Aorta (tissue), 5 donors: ENCODE measurements at regions of chr17 and their contacts with region 1.

Region 1: GRCh38 chr17:30093463-30094147 is 23.0 kb upstream of the NSRP1 start:
- DNase-seq: no peak
- ATAC-seq: peak; percentile 74
- H3K4me3 ChIP-seq: no peak overlapping the region
- H3K27ac ChIP-seq: no peak overlapping the region
- H3K4me1 ChIP-seq: peaks cover 0 to 6% of the 10 kb centered on the region in 2 donors
- H3K27me3 ChIP-seq: no peaks in the 10 kb centered on the region

Region 2: GRCh38 chr17:29807520-29808351 is 285.9 kb before region 1 on chr17:
- intact Hi-C with region 1: loop called (anchors 5 to 10 kb)
- DNase-seq: peak in 1 of 2 donors; percentile 72
- ATAC-seq: peak; percentile 77
- H3K4me3 ChIP-seq: no peak overlapping the region
- H3K27ac ChIP-seq: no peak overlapping the region
- H3K4me1 ChIP-seq: no peaks in the 10 kb centered on the region
- H3K27me3 ChIP-seq: no peaks in the 10 kb centered on the region

Region 3: DNA sequence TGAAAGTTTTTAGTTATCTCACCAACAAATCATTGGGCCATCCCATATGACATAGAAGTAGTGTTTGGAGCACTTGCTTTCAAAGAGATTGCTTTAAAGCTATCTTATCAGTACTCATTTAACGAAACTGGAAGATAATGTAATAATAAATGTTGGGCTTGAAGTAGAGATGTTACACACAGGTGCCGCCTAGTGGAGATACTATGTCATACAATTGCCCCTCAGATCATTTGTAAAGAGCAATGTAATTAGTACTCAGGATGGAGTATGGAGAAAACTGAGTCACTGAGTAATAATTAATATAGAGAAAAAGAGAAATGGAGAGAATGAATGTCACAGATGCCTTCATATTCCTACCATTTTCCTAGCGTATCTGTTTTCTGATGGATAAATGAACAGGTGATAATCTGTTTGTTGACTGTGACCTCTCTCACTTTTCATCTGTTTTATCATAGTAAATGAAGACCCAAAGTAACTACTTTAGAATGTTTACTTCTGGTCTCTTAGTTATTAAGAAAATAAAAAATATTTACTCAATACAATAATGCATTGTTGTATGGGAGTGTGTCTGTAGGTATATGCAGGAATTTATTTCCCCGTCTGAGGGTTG is 71.8 kb before region 1 on chr17:
- intact Hi-C with region 1: loop called (anchors 1 to 2 kb)
- DNase-seq: no peak
- ATAC-seq: no peak
- H3K4me3 ChIP-seq: no peak overlapping the region
- H3K27ac ChIP-seq: no peak overlapping the region
- H3K4me1 ChIP-seq: no peaks in the 10 kb centered on the region
- H3K27me3 ChIP-seq: no peaks in the 10 kb centered on the region

Region 4: DNA sequence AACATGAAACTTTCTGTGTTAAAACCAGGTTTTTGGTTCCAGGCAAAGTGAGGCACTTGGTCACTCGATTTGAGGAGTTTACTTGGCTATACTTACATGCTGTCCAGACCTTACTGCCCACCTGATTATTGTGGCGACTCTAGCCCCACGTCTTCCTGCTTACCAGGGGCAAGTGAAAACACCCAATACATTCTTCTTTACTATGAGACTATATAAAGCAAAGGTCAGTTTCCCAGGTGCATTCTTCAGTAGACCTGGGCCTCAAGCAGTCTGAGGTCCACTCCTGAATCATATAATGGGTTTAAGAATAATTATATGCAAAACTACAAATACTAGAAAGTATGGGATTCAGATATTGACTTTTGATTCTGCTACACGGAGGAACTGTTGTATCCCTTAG is 65.9 kb before region 1 on chr17:
- intact Hi-C with region 1: loop called (anchors 1 to 2 kb)
- DNase-seq: no peak
- ATAC-seq: no peak
- H3K4me3 ChIP-seq: no peak overlapping the region
- H3K27ac ChIP-seq: no peak overlapping the region
- H3K4me1 ChIP-seq: no peaks in the 10 kb centered on the region
- H3K27me3 ChIP-seq: no peaks in the 10 kb centered on the region